Naive thymus-derived CD4-positive, alpha-beta T cell (primary cell): ENCODE measurements at regions of chr18 and their contacts with region 1.

Region 1: GRCh38 chr18:35497370-35498197 is at the start of gene INO80C:
- DNase-seq: peak; percentile 87 to 94 (median 92)
- ATAC-seq: peak; percentile 93
- H3K4me3 ChIP-seq: peak within 1 kb of the TSS; percentile 96
- H3K4me3 Mint-ChIP-seq: peak within 1 kb of the TSS; percentile 84 to 100 (median 96)
- H3K27ac ChIP-seq: peak within 1 kb of the TSS; percentile 94
- H3K27ac Mint-ChIP-seq: peak within 1 kb of the TSS; percentile 96 to 100 (median 100)
- H3K4me1 ChIP-seq: peaks cover 9 to 12% of the 10 kb centered on the region in 2 donors
- H3K4me1 Mint-ChIP-seq: peaks cover 22 to 62% (median 51%) of the 10 kb centered on the region in 7 donors
- H3K27me3 ChIP-seq: no peaks in the 10 kb centered on the region
- H3K27me3 Mint-ChIP-seq: no peaks in the 10 kb centered on the region
- total RNA-seq, gene INO80C: 20.6 to 26.8 (median 25.7) TPM

Region 2: DNA sequence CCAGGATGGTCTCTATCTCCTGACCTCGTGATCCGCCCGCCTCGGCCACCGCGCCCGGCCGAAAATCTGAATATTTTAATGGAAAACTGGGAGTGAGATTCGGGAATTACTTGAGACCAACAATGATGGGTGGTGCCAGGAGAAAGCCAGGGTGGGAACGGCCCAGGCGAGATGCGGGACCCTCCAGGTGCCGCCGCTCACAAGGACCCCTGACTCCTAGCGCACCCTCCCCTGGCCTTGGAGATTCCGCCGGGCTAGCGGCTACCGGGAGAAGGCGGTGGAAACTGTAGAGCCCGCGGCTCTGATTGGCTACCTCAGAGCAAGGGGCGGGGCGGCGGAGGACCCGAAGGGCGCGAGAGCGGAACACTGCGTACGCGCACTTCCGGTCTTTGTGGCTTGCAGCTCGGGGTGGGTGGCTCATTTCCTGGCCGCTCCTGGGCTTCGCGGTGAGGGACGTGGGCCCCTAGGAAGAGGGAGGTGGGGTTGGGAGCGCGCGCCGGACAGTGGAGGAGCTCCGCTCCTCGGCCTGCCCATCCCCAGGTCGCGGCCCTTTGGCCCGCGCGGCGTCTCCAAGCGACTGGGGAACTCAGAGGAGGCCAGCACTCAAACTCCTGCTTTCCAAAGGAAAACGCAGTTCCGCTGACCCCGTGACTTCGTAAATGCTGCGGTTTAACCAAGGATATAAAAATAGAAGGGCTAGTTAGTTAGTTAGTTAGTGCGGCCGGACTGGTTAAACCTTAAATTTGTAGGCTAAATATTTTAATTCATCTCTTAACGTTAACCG is 256.7 kb before region 1 on chr18 and contains the start of gene ZNF397:
- CTCF ChIA-PET with region 1: no interaction called
- POLR2A ChIA-PET with region 1: no interaction called
- intact Hi-C with region 1: loop called (anchors 1 kb)
- DNase-seq: peak; percentile 87 to 96 (median 91)
- ATAC-seq: peak; percentile 99
- H3K4me3 ChIP-seq: peak within 1 kb of the TSS; percentile 94
- H3K4me3 Mint-ChIP-seq: peak within 1 kb of the TSS; percentile 88 to 98 (median 96)
- H3K27ac ChIP-seq: peak within 1 kb of the TSS; percentile 97
- H3K27ac Mint-ChIP-seq: peak within 1 kb of the TSS; percentile 90 to 99 (median 98)
- H3K4me1 ChIP-seq: peaks cover 9 to 17% of the 10 kb centered on the region in 2 donors
- H3K4me1 Mint-ChIP-seq: peaks cover 16 to 41% (median 31%) of the 10 kb centered on the region in 7 donors
- H3K27me3 ChIP-seq: no peaks in the 10 kb centered on the region
- H3K27me3 Mint-ChIP-seq: no peaks in the 10 kb centered on the region
- total RNA-seq, gene ZNF397: 12.1 to 59.1 (median 27.6) TPM

Region 3: DNA sequence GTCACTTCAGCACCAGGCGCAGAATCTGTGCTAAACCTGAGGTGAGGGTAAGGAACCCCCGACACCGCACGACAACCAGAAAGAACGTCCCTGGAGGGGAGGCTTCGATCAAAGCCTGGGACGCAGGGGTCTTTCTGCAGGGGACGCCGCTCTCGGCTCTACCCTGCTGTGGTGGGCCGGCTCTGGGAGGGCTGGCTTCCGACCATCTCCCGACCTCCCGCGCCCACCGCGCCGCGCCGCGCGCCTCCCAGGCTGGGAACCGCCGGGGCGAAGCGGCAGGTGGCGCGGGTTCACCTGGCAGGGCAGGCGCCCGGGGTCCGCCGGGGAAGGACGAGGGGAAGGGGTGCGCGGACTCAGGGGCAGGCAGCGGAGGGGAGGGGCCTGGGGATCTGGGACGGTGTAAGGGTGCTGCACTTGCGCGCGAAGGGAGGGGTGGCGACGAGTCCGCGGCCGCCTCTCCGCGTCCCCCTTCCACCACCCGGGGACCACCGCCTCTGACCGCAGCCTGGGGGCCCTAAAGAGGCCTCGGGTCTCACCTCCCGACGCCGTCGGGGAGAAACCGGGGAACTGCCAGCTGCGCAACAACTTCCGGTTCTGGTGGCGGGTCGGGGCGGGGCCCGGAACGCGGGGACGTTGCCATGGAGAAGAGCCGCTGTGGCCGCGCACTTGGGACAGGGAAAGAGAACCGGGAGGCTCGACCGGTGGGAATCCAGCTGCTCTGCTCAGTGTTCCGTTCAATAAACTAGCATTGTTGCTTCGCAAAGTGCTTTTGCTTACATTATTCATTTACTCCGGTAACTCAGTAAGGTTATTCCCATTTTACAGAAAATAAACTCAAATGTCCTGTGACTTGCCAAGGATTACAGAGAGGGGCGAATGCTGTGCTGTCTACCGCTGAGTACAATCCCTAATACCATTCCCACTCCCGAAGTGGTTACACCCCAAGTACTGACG is 120.6 kb before region 1 on chr18 and contains the start of gene ZNF396:
- CTCF ChIA-PET with region 1: no interaction called
- POLR2A ChIA-PET with region 1: interaction called, 3 read pairs
- intact Hi-C with region 1: loop called in 1 of 2 experiments (anchors 1 kb)
- DNase-seq: peak; percentile 51 to 72 (median 58)
- ATAC-seq: peak; percentile 81
- H3K4me3 ChIP-seq: peak within 1 kb of the TSS; percentile 75
- H3K4me3 Mint-ChIP-seq: peak within 1 kb of the TSS; percentile 80 to 92 (median 88)
- H3K27ac ChIP-seq: peak within 1 kb of the TSS; percentile 55
- H3K27ac Mint-ChIP-seq: peak within 1 kb of the TSS; percentile 44 to 90 (median 74)
- H3K4me1 ChIP-seq: no peaks in the 10 kb centered on the region
- H3K4me1 Mint-ChIP-seq: peaks cover 3 to 12% (median 10%) of the 10 kb centered on the region in 7 donors
- H3K27me3 ChIP-seq: no peaks in the 10 kb centered on the region
- H3K27me3 Mint-ChIP-seq: peaks cover 0 to 29% (median 0%) of the 10 kb centered on the region in 5 donors
- total RNA-seq, gene ZNF396: 0.11 to 8.2 (median 0.54) TPM

Region 4: DNA sequence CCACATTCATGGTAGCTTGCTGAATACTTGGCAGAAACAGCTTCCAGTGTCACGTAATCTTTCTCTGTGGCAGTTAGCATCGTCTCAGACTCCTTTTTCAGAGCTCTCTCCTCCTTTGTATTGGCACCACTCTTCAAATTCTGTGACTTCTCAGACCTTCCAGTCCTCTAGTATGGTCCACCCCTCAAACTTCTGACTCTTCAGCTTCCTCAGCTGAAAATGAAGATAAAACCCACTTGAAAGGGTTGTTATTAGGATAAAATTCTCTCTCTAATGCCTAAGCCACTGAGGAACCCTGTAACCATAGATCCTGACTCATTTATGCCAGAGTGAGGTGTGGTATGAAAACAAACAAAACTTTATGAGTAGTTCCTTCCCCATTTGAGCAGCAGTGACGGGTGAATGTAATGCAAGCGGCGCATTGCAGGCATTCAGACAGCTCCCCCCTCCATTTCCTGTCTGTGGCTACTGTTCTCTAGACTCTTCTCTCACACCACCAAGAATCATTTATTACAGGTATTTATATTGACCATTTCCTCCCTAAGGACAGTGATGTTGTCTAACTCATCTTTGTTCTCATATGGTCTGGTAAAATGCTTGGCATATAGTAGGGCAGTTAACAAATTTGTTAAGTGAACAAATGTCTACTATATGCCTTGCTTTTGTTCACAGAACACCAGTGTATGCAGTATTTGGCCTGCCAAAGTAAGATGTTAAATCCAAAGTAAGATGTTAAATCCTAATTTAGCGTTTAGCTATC is 119.3 kb after region 1 on chr18:
- CTCF ChIA-PET with region 1: no interaction called
- POLR2A ChIA-PET with region 1: interaction called, 8 read pairs
- intact Hi-C with region 1: loop called (anchors 1 to 2 kb)
- DNase-seq: peak in 8 of 9 donors; percentile 44 to 74 (median 69)
- ATAC-seq: peak; percentile 95
- H3K4me3 ChIP-seq: peak overlapping the region; percentile 43
- H3K4me3 Mint-ChIP-seq: no peak overlapping the region
- H3K27ac ChIP-seq: peak overlapping the region; percentile 70
- H3K27ac Mint-ChIP-seq: no peak overlapping the region
- H3K4me1 ChIP-seq: peaks cover 7 to 16% of the 10 kb centered on the region in 2 donors
- H3K4me1 Mint-ChIP-seq: peaks cover 7 to 25% (median 14%) of the 10 kb centered on the region in 7 donors
- H3K27me3 ChIP-seq: no peaks in the 10 kb centered on the region
- H3K27me3 Mint-ChIP-seq: no peaks in the 10 kb centered on the region

Region 5: GRCh38 chr18:36129300-36130038 is 631.9 kb after region 1 on chr18 and contains the starts of genes ELP2 and SLC39A6:
- CTCF ChIA-PET with region 1: no interaction called
- POLR2A ChIA-PET with region 1: interaction called, 3 read pairs
- intact Hi-C with region 1: loop called (anchors 1 kb)
- DNase-seq: peak; percentile 89 to 98 (median 95)
- ATAC-seq: peak; percentile 94
- H3K4me3 ChIP-seq: peak within 1 kb of the TSS; percentile 99
- H3K4me3 Mint-ChIP-seq: peak within 1 kb of the TSS; percentile 87 to 98 (median 95)
- H3K27ac ChIP-seq: peak within 1 kb of the TSS; percentile 96
- H3K27ac Mint-ChIP-seq: peak within 1 kb of the TSS; percentile 93 to 99 (median 98)
- H3K4me1 ChIP-seq: peaks cover 33 to 35% of the 10 kb centered on the region in 2 donors
- H3K4me1 Mint-ChIP-seq: peaks cover 39 to 81% (median 61%) of the 10 kb centered on the region in 7 donors
- H3K27me3 ChIP-seq: no peaks in the 10 kb centered on the region
- H3K27me3 Mint-ChIP-seq: no peaks in the 10 kb centered on the region
- total RNA-seq, gene ELP2: 79.3 to 177 (median 150) TPM
- total RNA-seq, gene SLC39A6: 12.1 to 25.2 (median 16.6) TPM

Region 6: DNA sequence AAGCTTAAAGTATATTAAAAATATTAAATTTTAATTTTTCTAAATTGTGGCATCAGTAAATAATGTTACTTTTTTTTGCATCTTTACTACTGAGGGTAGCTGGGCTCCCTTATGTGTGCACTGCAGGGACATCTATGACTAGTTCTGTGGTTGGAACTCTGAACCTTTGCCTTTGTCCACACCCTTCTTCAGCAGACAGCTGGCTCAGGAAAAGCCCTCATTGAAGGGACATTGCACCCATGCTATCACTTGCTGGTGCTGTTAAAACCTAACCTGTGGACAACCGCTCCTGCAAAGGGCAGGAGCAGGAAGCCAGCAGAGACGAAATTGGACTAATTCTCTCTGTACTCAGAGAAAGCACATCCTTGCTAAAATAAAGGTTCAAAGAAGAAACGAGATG is 719.8 kb after region 1 on chr18:
- CTCF ChIA-PET with region 1: no interaction called
- POLR2A ChIA-PET with region 1: no interaction called
- intact Hi-C with region 1: no loop called
- DNase-seq: no peak
- ATAC-seq: no peak
- H3K4me3 ChIP-seq: no peak overlapping the region
- H3K4me3 Mint-ChIP-seq: no peak overlapping the region
- H3K27ac ChIP-seq: no peak overlapping the region
- H3K27ac Mint-ChIP-seq: no peak overlapping the region
- H3K4me1 ChIP-seq: no peaks in the 10 kb centered on the region
- H3K4me1 Mint-ChIP-seq: no peaks in the 10 kb centered on the region
- H3K27me3 ChIP-seq: no peaks in the 10 kb centered on the region
- H3K27me3 Mint-ChIP-seq: peaks cover 0 to 6% (median 3%) of the 10 kb centered on the region in 5 donors